ENCODE measurements at regions of chr11 and their contacts with region 1.

Region 1: GRCh38 chr11:33257897-33258630 is 883 bp downstream of the HIPK3 start:
- DNase-seq: peak; percentile 68 to 83
- H3K4me3 ChIP-seq: peak overlapping the region; percentile 82
- H3K4me1 ChIP-seq: peaks cover 37% of the 10 kb centered on the region
- H3K27me3 ChIP-seq: no peaks in the 10 kb centered on the region

Region 2: DNA sequence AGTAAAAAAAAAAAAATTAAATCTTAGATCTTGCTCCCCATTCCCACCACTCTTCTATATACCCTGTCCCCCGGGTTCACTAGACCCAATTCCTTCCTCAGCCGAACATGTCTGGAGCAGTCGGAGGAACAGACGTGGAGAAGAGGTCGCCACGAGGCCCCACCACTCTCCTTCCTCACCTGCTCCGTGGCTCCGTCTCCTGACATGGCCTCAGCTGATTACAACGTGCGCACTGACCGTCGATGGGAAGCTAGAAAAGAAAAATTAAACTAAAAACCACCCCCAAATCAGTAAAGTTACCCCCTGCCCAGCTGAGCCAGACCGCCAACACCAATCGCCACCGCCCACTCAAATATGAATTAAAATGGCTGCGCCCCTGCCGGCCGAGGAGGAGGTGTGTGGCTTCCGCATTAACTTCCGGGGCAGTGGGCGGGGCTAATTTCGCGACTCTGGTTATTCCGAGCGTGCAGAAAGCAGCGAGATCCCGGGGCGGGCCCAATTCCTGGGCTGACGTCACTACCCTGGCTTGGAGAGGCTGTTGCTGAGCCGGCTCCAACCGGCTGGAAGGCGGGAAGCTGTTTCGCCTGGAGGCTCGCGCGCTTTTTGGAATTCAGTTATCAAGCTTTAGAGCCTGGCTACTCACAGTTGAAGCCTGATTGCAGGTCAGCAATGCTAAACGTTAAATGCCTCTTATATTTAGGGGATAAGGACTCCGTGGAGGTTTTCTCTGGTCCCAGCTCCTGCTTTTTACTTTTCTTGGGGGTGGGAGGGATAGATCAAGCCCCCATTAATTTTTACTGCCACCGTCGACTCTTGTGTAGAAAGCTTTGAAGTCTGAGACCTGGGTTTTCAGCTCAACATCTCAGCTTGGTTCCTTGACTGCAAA is 96.7 kb before region 1 on chr11 and contains the start of gene CSTF3:
- in situ Hi-C with region 1: loop called (anchors 10 kb)
- DNase-seq: peak; percentile 97 to 100
- H3K4me3 ChIP-seq: peak within 1 kb of the TSS; percentile 81
- H3K4me1 ChIP-seq: peaks cover 21% of the 10 kb centered on the region
- H3K27me3 ChIP-seq: no peaks in the 10 kb centered on the region